WTC11 (cell line): ENCODE measurements at regions of chr14 and their contacts with region 1.

Region 1: GRCh38 chr14:72084935-72085334 is 152.7 kb downstream of the RGS6 start:
- DNase-seq: no peak
- ATAC-seq: no peak
- H3K4me3 Mint-ChIP-seq: no peak overlapping the region
- H3K27ac Mint-ChIP-seq: no peak overlapping the region
- H3K4me1 Mint-ChIP-seq: peaks cover 44% of the 10 kb centered on the region
- H3K27me3 Mint-ChIP-seq: no peaks in the 10 kb centered on the region
- CTCF ChIP-seq: no peak

Region 2: GRCh38 chr14:72054911-72055310 is 30.0 kb before region 1 on chr14:
- CTCF ChIA-PET with region 1: no interaction called
- POLR2A ChIA-PET with region 1: no interaction called
- DNase-seq: no peak
- ATAC-seq: no peak
- H3K4me3 Mint-ChIP-seq: no peak overlapping the region
- H3K27ac Mint-ChIP-seq: no peak overlapping the region
- H3K4me1 Mint-ChIP-seq: peaks cover 14% of the 10 kb centered on the region
- H3K27me3 Mint-ChIP-seq: no peaks in the 10 kb centered on the region
- CTCF ChIP-seq: no peak

Region 3: DNA sequence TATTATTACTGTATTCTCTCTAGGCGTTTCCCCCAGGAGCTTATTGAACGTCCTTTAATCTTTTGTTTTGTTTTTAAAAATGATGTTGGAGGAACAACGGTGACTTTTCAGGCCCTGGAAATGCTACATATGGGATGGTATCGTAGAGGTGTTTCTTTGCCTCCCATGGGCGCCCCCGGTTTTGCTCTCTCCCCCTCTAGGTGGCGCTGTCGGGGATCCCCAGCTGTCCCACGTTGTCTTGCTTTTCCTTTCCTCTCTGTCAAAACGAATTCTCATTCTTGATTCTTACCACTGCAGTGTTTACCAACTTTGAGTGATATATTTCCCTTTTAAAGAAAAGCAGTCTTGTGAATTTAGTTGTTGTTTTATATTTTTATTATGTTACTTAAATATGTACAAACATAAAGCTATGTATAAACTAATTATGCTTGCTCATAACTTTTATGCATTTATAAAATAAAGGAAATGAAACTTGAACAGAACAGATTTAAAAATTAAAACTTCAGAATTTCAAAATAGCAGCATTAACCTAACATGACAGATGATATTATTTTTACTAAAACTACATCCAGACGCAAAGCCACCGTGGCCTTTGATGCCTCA is 19.2 kb after region 1 on chr14:
- CTCF ChIA-PET with region 1: interaction called, 16 read pairs
- POLR2A ChIA-PET with region 1: no interaction called
- DNase-seq: peak; percentile 78
- ATAC-seq: peak; percentile 74
- H3K4me3 Mint-ChIP-seq: no peak overlapping the region
- H3K27ac Mint-ChIP-seq: no peak overlapping the region
- H3K4me1 Mint-ChIP-seq: no peaks in the 10 kb centered on the region
- H3K27me3 Mint-ChIP-seq: no peaks in the 10 kb centered on the region; the same call in 1 of the 2 replicates
- CTCF ChIP-seq: peak; percentile 92

Region 4: DNA sequence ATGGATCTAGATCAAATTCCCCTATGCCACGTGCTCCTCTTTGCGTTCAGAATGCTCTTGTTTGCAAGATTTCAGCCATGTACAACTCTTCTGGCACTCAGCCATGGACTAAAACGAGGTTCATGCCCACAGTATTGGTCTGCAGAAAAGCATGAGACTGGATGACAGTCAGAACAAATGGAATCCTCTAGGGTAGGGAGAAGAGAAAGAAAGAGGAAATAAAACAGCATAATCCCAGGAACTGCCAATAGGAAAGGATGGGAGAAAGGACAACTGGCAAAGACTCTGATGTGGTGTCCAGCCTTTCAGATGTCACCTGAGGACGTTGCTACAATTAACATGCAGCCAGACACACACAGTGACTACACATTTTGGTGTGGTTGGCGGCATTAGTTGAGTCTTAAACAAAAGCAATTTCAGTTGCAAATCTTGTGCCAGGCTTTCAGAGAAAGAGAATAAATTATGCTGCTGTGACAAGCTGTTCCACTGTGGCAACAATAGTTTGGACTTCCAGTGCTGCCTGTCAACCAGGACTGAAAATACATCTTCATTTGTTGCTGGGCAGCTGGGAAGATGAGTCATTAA is 185.3 kb after region 1 on chr14:
- CTCF ChIA-PET with region 1: no interaction called
- POLR2A ChIA-PET with region 1: no interaction called
- DNase-seq: no peak
- ATAC-seq: no peak
- H3K4me3 Mint-ChIP-seq: no peak overlapping the region
- H3K27ac Mint-ChIP-seq: no peak overlapping the region
- H3K4me1 Mint-ChIP-seq: peaks cover 12% of the 10 kb centered on the region; the same call in 1 of the 2 replicates
- H3K27me3 Mint-ChIP-seq: peaks cover 8% of the 10 kb centered on the region
- CTCF ChIP-seq: no peak